PC-9 (cell line): ENCODE measurements at regions of chr2 and their contacts with region 1.

Region 1: GRCh38 chr2:121128754-121129659 is 156.0 kb downstream of the TFCP2L1 start:
- DNase-seq: peak; percentile 76 to 82
- H3K4me3 ChIP-seq: no peak overlapping the region
- H3K27ac ChIP-seq: no peak overlapping the region
- H3K4me1 ChIP-seq: peaks cover 6% of the 10 kb centered on the region
- H3K27me3 ChIP-seq: peaks cover 8% of the 10 kb centered on the region; the same call in 1 of the 2 replicates
- CTCF ChIP-seq: peak; percentile 93

Region 2: GRCh38 chr2:119198240-119198840 is 1930.7 kb before region 1 on chr2:
- CTCF ChIA-PET with region 1: no interaction called
- POLR2A ChIA-PET with region 1: no interaction called
- intact Hi-C with region 1: no loop called
- DNase-seq: peak; percentile 29 to 59
- H3K4me3 ChIP-seq: no peak overlapping the region
- H3K27ac ChIP-seq: no peak overlapping the region
- H3K4me1 ChIP-seq: peaks cover 50% of the 10 kb centered on the region
- H3K27me3 ChIP-seq: no peaks in the 10 kb centered on the region
- CTCF ChIP-seq: no peak

Region 3: GRCh38 chr2:121155502-121156056 is 26.6 kb after region 1 on chr2:
- CTCF ChIA-PET with region 1: interaction called, 16 read pairs
- POLR2A ChIA-PET with region 1: no interaction called
- intact Hi-C with region 1: no loop called
- DNase-seq: peak in 1 of 2 experiments; percentile 63
- H3K4me3 ChIP-seq: no peak overlapping the region
- H3K27ac ChIP-seq: no peak overlapping the region
- H3K4me1 ChIP-seq: peaks cover 20% of the 10 kb centered on the region
- H3K27me3 ChIP-seq: no peaks in the 10 kb centered on the region
- CTCF ChIP-seq: no peak

Region 4: GRCh38 chr2:121197369-121198091 is 68.5 kb after region 1 on chr2:
- CTCF ChIA-PET with region 1: interaction called, 11 read pairs
- POLR2A ChIA-PET with region 1: interaction called, 19 read pairs
- intact Hi-C with region 1: no loop called
- DNase-seq: peak; percentile 82 to 93
- H3K4me3 ChIP-seq: peak overlapping the region; percentile 22; the same call in 1 of the 2 replicates
- H3K27ac ChIP-seq: peak overlapping the region; percentile 87
- H3K4me1 ChIP-seq: peaks cover 43% of the 10 kb centered on the region
- H3K27me3 ChIP-seq: no peaks in the 10 kb centered on the region
- CTCF ChIP-seq: no peak

Region 5: GRCh38 chr2:121319953-121320352 is 190.9 kb after region 1 on chr2:
- CTCF ChIA-PET with region 1: interaction called, 6 read pairs
- POLR2A ChIA-PET with region 1: no interaction called
- intact Hi-C with region 1: loop called (anchors 1 kb)
- DNase-seq: no peak
- H3K4me3 ChIP-seq: no peak overlapping the region
- H3K27ac ChIP-seq: no peak overlapping the region
- H3K4me1 ChIP-seq: no peaks in the 10 kb centered on the region
- H3K27me3 ChIP-seq: no peaks in the 10 kb centered on the region
- CTCF ChIP-seq: no peak

Region 6: DNA sequence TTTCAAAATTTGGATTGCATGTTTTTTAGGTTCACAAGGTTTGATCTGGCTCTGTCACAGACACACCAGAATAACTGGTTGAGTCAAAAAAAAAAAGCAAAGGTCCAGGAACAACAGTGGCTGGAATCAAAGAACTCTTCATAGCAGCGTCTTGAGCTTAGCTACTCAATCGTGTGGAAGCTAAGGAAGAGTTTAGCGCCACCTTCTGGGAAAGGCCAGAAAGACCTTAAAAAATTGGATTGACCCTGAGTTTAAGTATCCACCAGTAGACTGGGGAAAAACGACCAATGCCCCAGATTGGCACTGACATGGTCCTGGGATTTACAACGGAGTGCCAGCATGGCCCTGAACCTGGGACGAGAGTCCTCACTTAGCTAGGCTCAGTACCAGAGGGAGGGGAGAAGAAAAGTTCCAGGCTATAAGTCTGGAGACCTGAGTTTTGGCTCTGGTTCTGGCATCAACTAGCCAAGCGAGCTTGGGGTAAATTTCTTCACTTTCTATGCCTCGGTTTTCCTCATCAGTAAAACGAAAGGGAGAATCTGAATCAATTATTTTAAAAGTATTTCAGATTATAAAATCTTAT is 227.1 kb after region 1 on chr2:
- CTCF ChIA-PET with region 1: interaction called, 59 read pairs
- POLR2A ChIA-PET with region 1: interaction called, 4 read pairs
- intact Hi-C with region 1: loop called (anchors 1 kb)
- DNase-seq: peak; percentile 56 to 72
- H3K4me3 ChIP-seq: no peak overlapping the region
- H3K27ac ChIP-seq: no peak overlapping the region
- H3K4me1 ChIP-seq: peaks cover 12% of the 10 kb centered on the region
- H3K27me3 ChIP-seq: no peaks in the 10 kb centered on the region
- CTCF ChIP-seq: peak; percentile 92

Region 7: GRCh38 chr2:121722479-121722878 is 593.5 kb after region 1 on chr2:
- CTCF ChIA-PET with region 1: no interaction called
- POLR2A ChIA-PET with region 1: no interaction called
- intact Hi-C with region 1: no loop called
- DNase-seq: peak in 1 of 2 experiments; percentile 70
- H3K4me3 ChIP-seq: no peak overlapping the region
- H3K27ac ChIP-seq: peak overlapping the region; percentile 42
- H3K4me1 ChIP-seq: peaks cover 13% of the 10 kb centered on the region; the same call in 1 of the 2 replicates
- H3K27me3 ChIP-seq: no peaks in the 10 kb centered on the region
- CTCF ChIP-seq: no peak